ENCODE measurements at regions of chr4 and their contacts with region 1.

Region 1: GRCh38 chr4:99868126-99868596 is 26.1 kb downstream of the LAMTOR3 start:
- DNase-seq: peak; percentile 22
- H3K4me3 ChIP-seq: no peak overlapping the region
- H3K27ac ChIP-seq: peak overlapping the region in 1 of 2 donors; percentile 32
- H3K4me1 ChIP-seq: no peaks in the 10 kb centered on the region
- H3K27me3 ChIP-seq: no peaks in the 10 kb centered on the region
- CTCF ChIP-seq: no peak
- POLR2A ChIP-seq: no peak

Region 2: DNA sequence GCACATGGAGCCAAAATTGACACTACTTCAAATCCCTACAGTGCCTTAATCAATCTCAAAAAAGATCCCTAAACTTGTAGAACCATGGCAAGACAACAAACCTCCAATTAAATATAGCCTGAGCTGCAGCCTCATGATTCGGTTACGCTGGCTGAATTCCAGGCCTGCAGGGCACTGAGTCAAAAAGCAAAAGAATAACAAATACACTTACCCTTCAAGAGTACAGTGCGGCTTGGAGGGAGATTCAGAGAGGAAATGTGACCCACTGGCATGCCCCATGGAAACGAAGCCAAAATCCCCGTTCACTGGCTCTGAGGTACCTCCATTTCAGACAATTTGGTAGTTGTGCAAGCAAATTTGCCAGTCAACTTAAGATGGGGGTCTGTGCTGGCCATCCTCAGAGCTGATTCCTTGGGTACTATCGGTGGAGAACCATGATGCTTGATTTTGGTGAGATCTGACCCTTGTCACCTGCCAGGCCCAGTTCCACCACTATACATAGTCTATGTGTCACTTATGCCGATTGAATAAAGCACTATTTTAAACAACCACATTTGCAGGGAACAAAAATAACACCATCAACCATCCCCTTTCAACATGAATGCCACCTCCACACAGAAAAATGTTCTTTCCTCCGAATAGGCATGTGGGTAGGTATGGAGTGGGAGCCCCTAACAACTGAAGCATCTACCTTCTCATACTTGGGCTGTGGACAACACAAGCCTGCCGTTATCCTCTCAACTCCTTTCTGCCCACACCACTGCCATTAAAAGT is 212.7 kb before region 1 on chr4:
- intact Hi-C with region 1: loop called (anchors 10 kb)
- DNase-seq: no peak
- H3K4me3 ChIP-seq: no peak overlapping the region
- H3K27ac ChIP-seq: no peak overlapping the region
- H3K4me1 ChIP-seq: no peaks in the 10 kb centered on the region
- H3K27me3 ChIP-seq: no peaks in the 10 kb centered on the region
- CTCF ChIP-seq: no peak
- POLR2A ChIP-seq: no peak

Region 3: GRCh38 chr4:99687120-99687519 is 181.0 kb before region 1 on chr4:
- intact Hi-C with region 1: no loop called
- DNase-seq: no peak
- H3K4me3 ChIP-seq: no peak overlapping the region
- H3K27ac ChIP-seq: no peak overlapping the region
- H3K4me1 ChIP-seq: no peaks in the 10 kb centered on the region
- H3K27me3 ChIP-seq: no peaks in the 10 kb centered on the region
- CTCF ChIP-seq: no peak
- POLR2A ChIP-seq: no peak

Region 4: GRCh38 chr4:99808260-99808857 is 59.8 kb before region 1 on chr4:
- intact Hi-C with region 1: loop called (anchors 10 kb)
- DNase-seq: peak; percentile 23
- H3K4me3 ChIP-seq: no peak overlapping the region
- H3K27ac ChIP-seq: no peak overlapping the region
- H3K4me1 ChIP-seq: no peaks in the 10 kb centered on the region
- H3K27me3 ChIP-seq: no peaks in the 10 kb centered on the region
- CTCF ChIP-seq: peak in 3 of 4 experiments; percentile 28 to 54 (median 43)
- POLR2A ChIP-seq: no peak

Region 5: GRCh38 chr4:100095729-100096595 is 227.8 kb after region 1 on chr4:
- intact Hi-C with region 1: no loop called
- DNase-seq: peak; percentile 48
- H3K4me3 ChIP-seq: no peak overlapping the region
- H3K27ac ChIP-seq: no peak overlapping the region
- H3K4me1 ChIP-seq: no peaks in the 10 kb centered on the region
- H3K27me3 ChIP-seq: no peaks in the 10 kb centered on the region
- CTCF ChIP-seq: peak; percentile 26 to 49 (median 40)
- POLR2A ChIP-seq: no peak